Psoas muscle (tissue), 8 donors: ENCODE measurements at regions of chr2 and their contacts with region 1.

Region 1: GRCh38 chr2:190088917-190089316 is 26.4 kb upstream of the MSTN start:
- DNase-seq: peak in 1 of 2 donors; percentile 19
- ATAC-seq: peak; percentile 64 to 91 (median 76)
- H3K4me3 ChIP-seq: no peak overlapping the region
- H3K27ac ChIP-seq: no peak overlapping the region
- H3K4me1 ChIP-seq: peaks cover 5% of the 10 kb centered on the region
- H3K27me3 ChIP-seq: no peaks in the 10 kb centered on the region
- CTCF ChIP-seq: peak; percentile 81

Region 2: DNA sequence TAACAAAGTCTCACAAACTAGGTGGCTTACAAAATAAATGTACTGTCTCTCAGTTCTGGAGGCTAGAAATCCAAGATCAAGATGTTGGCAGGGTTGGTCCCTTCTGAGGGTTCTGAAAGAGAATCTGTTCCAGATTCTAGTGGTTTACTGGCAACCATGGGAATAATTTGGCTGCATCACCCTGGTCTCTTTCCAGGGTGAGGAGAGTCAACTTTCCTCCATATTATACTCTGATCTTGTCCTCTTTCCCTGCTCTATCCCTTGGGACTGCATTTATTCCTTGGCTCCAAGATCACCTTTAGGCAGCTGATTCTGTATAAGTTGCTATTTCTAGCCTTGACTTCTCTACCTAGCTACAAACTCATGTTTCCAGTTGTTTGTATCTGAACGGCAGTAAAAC is 543.5 kb before region 1 on chr2:
- intact Hi-C with region 1: no loop called
- DNase-seq: no peak
- ATAC-seq: peak; percentile 37 to 59 (median 52)
- H3K4me3 ChIP-seq: no peak overlapping the region
- H3K27ac ChIP-seq: peak overlapping the region; percentile 63
- H3K4me1 ChIP-seq: peaks cover 33% of the 10 kb centered on the region
- H3K27me3 ChIP-seq: no peaks in the 10 kb centered on the region
- CTCF ChIP-seq: no peak

Region 3: DNA sequence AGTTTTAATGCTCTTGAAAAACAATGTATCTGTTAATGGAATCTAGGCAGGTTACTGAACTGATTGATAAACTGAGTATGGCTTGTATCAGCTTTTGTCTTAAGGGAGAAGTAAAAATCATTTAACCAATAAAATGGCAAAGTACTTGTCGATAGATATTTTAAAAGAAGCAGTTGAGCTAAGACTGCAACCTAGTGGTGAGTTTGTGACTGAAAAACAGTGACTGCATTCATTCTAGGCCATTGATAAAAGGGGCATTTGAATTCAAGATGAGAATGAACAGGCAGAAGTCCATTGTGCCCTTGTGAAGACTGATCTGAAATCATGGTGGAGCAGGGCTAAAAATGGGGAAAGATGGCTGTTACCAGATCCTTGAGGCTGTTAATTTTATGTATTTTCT is 33.1 kb after region 1 on chr2:
- intact Hi-C with region 1: loop called (anchors 2 to 5 kb)
- DNase-seq: no peak
- ATAC-seq: no peak
- H3K4me3 ChIP-seq: no peak overlapping the region
- H3K27ac ChIP-seq: no peak overlapping the region
- H3K4me1 ChIP-seq: no peaks in the 10 kb centered on the region
- H3K27me3 ChIP-seq: no peaks in the 10 kb centered on the region
- CTCF ChIP-seq: peak; percentile 58

Region 4: GRCh38 chr2:190180313-190181122 is 91.6 kb after region 1 on chr2:
- intact Hi-C with region 1: loop called (anchors 5 kb)
- DNase-seq: peak; percentile 71 to 84
- ATAC-seq: peak; percentile 89 to 94 (median 93)
- H3K4me3 ChIP-seq: peak overlapping the region; percentile 88
- H3K27ac ChIP-seq: peak overlapping the region; percentile 90
- H3K4me1 ChIP-seq: peaks cover 15% of the 10 kb centered on the region
- H3K27me3 ChIP-seq: no peaks in the 10 kb centered on the region
- CTCF ChIP-seq: peak; percentile 60

Region 5: GRCh38 chr2:190277234-190278112 is 188.6 kb after region 1 on chr2:
- intact Hi-C with region 1: loop called (anchors 5 to 10 kb)
- DNase-seq: no peak
- ATAC-seq: no peak
- H3K4me3 ChIP-seq: no peak overlapping the region
- H3K27ac ChIP-seq: no peak overlapping the region
- H3K4me1 ChIP-seq: peaks cover 17% of the 10 kb centered on the region
- H3K27me3 ChIP-seq: no peaks in the 10 kb centered on the region
- CTCF ChIP-seq: peak; percentile 44

Region 6: DNA sequence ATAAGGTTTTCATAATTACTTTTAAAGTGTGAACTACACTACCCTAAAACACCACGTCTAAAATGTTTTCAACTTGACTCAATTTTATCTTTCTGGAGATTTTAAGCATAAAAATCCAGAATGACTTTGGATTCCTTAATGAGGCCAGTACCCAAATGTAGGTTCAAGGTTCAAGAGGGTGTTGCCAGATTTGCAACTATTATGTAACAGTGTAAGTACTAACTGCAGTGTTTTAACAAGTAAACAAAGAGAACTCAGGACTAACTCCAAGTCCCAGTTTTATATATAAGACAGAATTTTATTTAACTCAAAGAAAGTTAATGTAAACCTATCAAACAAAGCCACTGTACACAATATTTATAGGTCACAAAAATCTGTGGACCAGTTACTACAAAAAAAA is 225.0 kb after region 1 on chr2:
- intact Hi-C with region 1: loop called in 1 of 2 experiments (anchors 2 kb)
- DNase-seq: no peak
- ATAC-seq: no peak
- H3K4me3 ChIP-seq: no peak overlapping the region
- H3K27ac ChIP-seq: no peak overlapping the region
- H3K4me1 ChIP-seq: peaks cover 35% of the 10 kb centered on the region
- H3K27me3 ChIP-seq: no peaks in the 10 kb centered on the region
- CTCF ChIP-seq: no peak

Region 7: DNA sequence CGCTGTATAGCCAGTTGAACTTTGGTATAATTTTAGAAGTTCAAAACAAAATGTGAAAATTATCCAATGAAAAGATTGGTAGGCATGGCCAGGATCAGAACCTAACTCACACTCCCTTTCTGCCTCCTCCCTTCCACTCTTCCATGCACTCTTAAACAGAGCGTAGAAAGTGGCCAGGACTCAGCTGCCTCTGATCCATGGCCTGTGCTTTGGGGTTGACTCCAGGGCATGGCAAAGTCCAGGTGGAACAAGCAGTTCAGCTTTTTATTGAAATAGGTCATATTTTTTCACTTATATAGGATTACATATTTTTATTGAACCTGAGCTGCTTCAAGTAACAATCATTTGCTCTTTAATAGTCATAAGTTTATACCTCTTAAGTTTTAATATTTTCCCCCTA is 280.7 kb after region 1 on chr2:
- intact Hi-C with region 1: loop called (anchors 5 kb)
- DNase-seq: no peak
- ATAC-seq: no peak
- H3K4me3 ChIP-seq: no peak overlapping the region
- H3K27ac ChIP-seq: no peak overlapping the region
- H3K4me1 ChIP-seq: no peaks in the 10 kb centered on the region
- H3K27me3 ChIP-seq: no peaks in the 10 kb centered on the region
- CTCF ChIP-seq: no peak

Region 8: DNA sequence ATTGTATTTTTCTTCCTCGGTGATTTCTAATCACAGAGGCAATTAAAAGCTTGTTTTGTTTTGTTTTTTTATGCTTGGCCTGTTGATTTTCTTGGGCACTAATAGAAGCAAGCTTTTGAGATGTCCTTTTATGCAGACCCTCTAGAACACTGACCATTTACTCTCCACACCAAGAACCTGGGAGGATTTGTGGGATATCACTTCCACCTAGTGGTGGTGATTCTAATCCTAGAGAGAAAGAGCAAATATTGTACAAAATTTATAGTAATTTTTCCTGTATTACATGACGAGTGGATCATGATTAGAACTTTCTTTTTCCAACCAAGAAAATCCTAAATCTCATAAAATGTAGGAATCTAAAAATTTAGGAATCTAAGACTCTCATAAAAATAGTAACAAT is 422.2 kb after region 1 on chr2:
- intact Hi-C with region 1: loop called in 1 of 2 experiments (anchors 5 kb)
- DNase-seq: no peak
- ATAC-seq: no peak
- H3K4me3 ChIP-seq: no peak overlapping the region
- H3K27ac ChIP-seq: no peak overlapping the region
- H3K4me1 ChIP-seq: no peaks in the 10 kb centered on the region
- H3K27me3 ChIP-seq: no peaks in the 10 kb centered on the region
- CTCF ChIP-seq: peak; percentile 48